Posterior vena cava (tissue), 2 donors: ENCODE measurements at regions of chr14 and their contacts with region 1.

Region 1: DNA sequence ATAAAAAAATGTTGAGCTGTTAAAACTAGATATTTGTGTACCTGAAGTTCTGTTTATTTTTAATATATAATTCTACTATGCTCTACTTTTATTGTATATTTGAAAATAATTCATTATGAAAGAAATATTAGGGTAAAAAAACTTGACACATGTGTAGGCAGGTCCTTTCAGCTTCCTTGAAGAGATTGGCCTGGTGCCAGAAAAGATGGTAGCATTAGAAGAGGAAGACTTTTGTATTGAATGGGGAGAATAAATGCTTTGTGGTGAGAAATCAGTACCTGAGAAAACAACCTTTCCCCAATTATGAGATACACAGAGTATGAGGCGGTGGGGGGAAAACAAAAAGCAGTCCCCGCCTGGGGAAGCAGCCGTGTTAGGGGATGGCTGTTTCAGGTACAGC is 1492.3 kb upstream of the SEL1L start:
- DNase-seq: no peak

Region 2: GRCh38 chr14:81797315-81797714 is 1228.7 kb before region 1 on chr14:
- intact Hi-C with region 1: loop called in 1 of 2 experiments (anchors 10 kb)
- DNase-seq: no peak

Region 3: DNA sequence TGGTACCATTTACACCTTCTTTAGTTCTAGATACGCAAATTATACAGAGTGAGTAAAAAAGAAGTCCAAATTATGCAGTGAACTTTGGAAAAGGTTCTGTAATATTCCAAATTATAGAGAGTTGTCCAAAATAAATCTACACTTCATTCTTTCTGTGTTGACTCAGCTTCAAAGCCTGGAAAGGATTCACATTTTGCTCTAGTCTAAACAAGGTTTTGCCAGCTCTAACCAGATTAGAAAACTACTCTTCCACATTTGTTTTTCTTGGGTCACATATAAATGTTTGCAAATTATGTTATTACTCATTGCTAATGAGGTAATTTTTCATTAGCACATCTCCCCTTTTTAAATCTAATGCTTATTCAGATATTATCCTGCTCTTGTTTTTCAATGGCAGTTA is 70.1 kb after region 1 on chr14:
- intact Hi-C with region 1: no loop called
- DNase-seq: no peak

Region 4: GRCh38 chr14:83909507-83909906 is 883.5 kb after region 1 on chr14:
- intact Hi-C with region 1: loop called in 1 of 2 experiments (anchors 10 kb)
- DNase-seq: no peak